ENCODE measurements at regions of chrX and their contacts with region 1.

Region 1: DNA sequence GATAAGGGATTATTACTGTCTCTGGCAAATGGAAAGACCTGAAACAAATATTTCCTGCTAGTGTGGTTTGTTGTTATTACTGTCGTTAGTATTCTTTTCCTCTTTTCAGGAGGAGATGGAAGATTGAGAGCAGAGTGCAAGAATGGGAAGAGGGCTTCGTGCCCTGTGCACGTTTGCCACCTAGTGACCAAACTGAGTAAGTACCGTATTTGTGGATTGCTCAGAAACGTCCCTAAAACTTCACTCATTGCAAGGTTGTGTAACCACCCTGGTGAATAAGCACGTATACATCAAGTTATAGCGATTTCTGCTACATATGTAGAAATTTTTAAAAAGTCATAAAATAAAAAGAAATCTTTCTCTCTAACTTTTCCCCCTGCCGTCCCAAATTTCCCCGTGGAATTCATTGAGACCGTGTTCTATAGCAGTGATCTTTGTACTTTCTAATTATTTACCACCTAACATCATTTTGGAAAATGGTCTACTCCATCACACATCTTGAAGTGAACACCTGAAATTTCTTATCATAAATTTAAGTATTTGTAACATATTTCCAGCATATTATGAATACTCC is 24.3 kb downstream of the LINC00632 start:
- DNase-seq: no peak
- ATAC-seq: peak; percentile 59

Region 2: DNA sequence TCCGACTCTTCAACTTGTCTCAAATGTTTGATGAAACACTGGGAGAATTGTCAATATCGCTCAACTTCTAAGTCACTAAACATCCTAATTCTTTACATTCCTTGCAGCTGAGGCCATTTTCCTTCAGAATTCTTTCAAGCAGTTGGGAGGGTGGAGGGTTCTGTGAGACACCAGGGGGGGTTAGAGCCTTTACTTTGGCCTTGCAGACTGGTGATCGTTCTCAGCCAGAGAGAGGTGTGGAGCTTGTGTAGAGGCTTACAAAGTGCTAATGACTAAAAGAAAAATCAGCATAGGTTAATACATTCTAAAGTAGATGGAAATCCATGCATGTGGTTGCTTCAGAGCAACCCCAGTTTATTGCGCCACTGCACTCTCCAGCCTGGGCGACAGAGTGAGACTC is 207.7 kb before region 1 on chrX:
- intact Hi-C with region 1: no loop called
- DNase-seq: no peak
- ATAC-seq: no peak

Region 3: DNA sequence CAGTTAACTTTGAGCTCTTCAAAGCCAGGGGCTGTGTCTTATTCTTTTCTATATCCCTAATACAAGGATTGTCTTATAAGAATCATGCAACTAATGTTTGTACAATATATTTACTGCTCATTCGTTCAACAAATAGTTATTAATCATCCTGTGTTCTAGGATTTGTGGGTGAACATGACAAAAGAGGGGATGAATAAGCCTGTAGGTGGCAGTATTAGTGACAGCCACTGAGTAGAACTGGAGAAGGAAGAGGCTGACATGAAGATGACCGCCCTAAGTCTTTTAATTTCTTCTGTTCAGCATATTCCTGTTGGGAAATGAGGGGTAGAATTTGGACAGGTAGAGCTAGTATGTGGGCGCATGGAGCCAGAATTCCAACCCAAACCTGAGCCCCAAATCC is 36.2 kb before region 1 on chrX:
- intact Hi-C with region 1: loop called (anchors 5 kb)
- DNase-seq: no peak
- ATAC-seq: no peak

Measured in Right ventricle myocardium superior (tissue), 1 donor.